ENCODE measurements at regions of chr21 and their contacts with region 1.

Region 1: GRCh38 chr21:45140346-45140940 is 66.1 kb downstream of the ADARB1 start:
- DNase-seq: peak; percentile 90
- H3K4me3 ChIP-seq: no peak overlapping the region; a peak in 1 of 4 replicates
- H3K27ac ChIP-seq: no peak overlapping the region
- H3K4me1 ChIP-seq: peaks cover 6 to 9% of the 10 kb centered on the region in 2 experiments; a peak in 3 of 4 replicates
- H3K27me3 ChIP-seq: no peaks in the 10 kb centered on the region
- CTCF ChIP-seq: peak; percentile 91
- EP300 ChIP-seq: no peak
- RAD21 ChIP-seq: peak; percentile 99

Region 2: GRCh38 chr21:44984631-44985440 is 155.6 kb before region 1 on chr21:
- CTCF ChIA-PET with region 1: interaction called, 40 read pairs
- POLR2A ChIA-PET with region 1: no interaction called
- DNase-seq: peak; percentile 76
- H3K4me3 ChIP-seq: no peak overlapping the region
- H3K27ac ChIP-seq: peak overlapping the region in 1 of 2 experiments; percentile 75; a peak in 2 of 4 replicates
- H3K4me1 ChIP-seq: peaks cover 0 to 68% of the 10 kb centered on the region in 2 experiments; a peak in 3 of 4 replicates
- H3K27me3 ChIP-seq: no peaks in the 10 kb centered on the region
- CTCF ChIP-seq: no peak
- EP300 ChIP-seq: no peak
- RAD21 ChIP-seq: no peak

Region 3: GRCh38 chr21:45120975-45121374 is 19.5 kb before region 1 on chr21:
- CTCF ChIA-PET with region 1: interaction called, 177 read pairs
- POLR2A ChIA-PET with region 1: no interaction called
- DNase-seq: no peak
- H3K4me3 ChIP-seq: no peak overlapping the region
- H3K27ac ChIP-seq: no peak overlapping the region
- H3K4me1 ChIP-seq: peaks cover 0 to 15% of the 10 kb centered on the region in 2 experiments; a peak in 1 of 4 replicates
- H3K27me3 ChIP-seq: no peaks in the 10 kb centered on the region
- CTCF ChIP-seq: no peak
- EP300 ChIP-seq: no peak
- RAD21 ChIP-seq: no peak

Region 4: GRCh38 chr21:45228171-45228641 is 87.8 kb after region 1 on chr21:
- CTCF ChIA-PET with region 1: interaction called, 14 read pairs
- POLR2A ChIA-PET with region 1: no interaction called
- DNase-seq: no peak
- H3K4me3 ChIP-seq: no peak overlapping the region
- H3K27ac ChIP-seq: peak overlapping the region; percentile 54 to 72; a peak in 3 of 4 replicates
- H3K4me1 ChIP-seq: peaks cover 7 to 13% of the 10 kb centered on the region in 2 experiments; a peak in 2 of 4 replicates
- H3K27me3 ChIP-seq: no peaks in the 10 kb centered on the region
- CTCF ChIP-seq: no peak; the same call in 1 of the 2 replicates
- EP300 ChIP-seq: no peak; a peak in 1 of 4 replicates
- RAD21 ChIP-seq: no peak

Region 5: GRCh38 chr21:45277101-45278045 is 136.9 kb after region 1 on chr21:
- CTCF ChIA-PET with region 1: interaction called, 271 read pairs
- POLR2A ChIA-PET with region 1: no interaction called
- DNase-seq: no peak
- H3K4me3 ChIP-seq: no peak overlapping the region
- H3K27ac ChIP-seq: no peak overlapping the region
- H3K4me1 ChIP-seq: no peaks in the 10 kb centered on the region
- H3K27me3 ChIP-seq: no peaks in the 10 kb centered on the region
- CTCF ChIP-seq: no peak
- EP300 ChIP-seq: no peak
- RAD21 ChIP-seq: no peak

Region 6: DNA sequence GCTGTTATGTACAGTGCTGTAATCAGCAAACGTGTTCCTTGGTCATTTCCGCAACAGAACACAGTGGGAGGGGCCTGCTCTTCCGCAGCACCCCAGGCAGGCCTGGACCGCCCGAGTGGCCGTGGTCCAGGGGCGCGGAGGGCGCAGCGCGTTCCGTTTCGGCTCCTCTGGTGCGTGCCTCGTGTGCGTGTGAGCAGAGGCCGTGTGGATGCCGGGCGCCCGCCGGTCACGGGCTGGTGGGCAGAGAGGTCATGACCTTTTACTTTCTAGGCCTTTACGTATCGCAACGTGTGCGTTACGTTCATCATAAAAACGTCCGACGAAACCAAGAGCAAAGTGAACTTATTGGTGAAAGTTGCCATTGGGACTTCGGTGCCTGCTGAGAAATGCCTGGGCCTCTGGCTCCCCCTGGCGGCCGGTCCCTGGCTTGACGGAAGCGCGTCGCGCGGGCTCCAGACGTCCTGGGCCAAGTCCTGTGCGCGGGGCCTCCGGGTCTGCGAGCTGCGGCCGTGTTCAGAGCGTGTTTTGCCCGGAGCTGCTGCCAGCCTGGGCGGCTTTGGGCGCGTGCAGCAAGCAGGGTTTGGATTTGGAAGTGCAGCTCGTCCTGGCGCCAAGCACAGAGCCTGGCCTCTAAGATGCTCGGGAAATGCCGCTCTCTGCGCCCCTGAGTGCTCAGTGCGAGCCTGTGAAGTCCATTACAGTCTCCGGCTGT is 298.9 kb after region 1 on chr21:
- CTCF ChIA-PET with region 1: interaction called, 57 read pairs
- POLR2A ChIA-PET with region 1: no interaction called
- DNase-seq: peak; percentile 95
- H3K4me3 ChIP-seq: no peak overlapping the region; a peak in 1 of 4 replicates
- H3K27ac ChIP-seq: peak overlapping the region in 1 of 2 experiments; percentile 32; a peak in 1 of 4 replicates
- H3K4me1 ChIP-seq: peaks cover 0 to 4% of the 10 kb centered on the region in 2 experiments; a peak in 1 of 4 replicates
- H3K27me3 ChIP-seq: no peaks in the 10 kb centered on the region
- CTCF ChIP-seq: peak; percentile 83
- EP300 ChIP-seq: no peak
- RAD21 ChIP-seq: peak; percentile 96